HepG2 (cell line): ENCODE measurements at regions of chr9 and their contacts with region 1.

Region 1: GRCh38 chr9:100028201-100028784 is 70.5 kb downstream of the ERP44 start:
- DNase-seq: peak; percentile 61
- ATAC-seq: peak; percentile 99
- H3K4me3 ChIP-seq: no peak overlapping the region
- H3K27ac ChIP-seq: no peak overlapping the region
- H3K4me1 ChIP-seq: no peaks in the 10 kb centered on the region
- H3K27me3 ChIP-seq: no peaks in the 10 kb centered on the region
- CTCF ChIP-seq: peak; percentile 90
- EP300 ChIP-seq: no peak
- POLR2A ChIP-seq: no peak
- RAD21 ChIP-seq: peak; percentile 77

Region 2: GRCh38 chr9:100098887-100099721 is 70.8 kb after region 1 on chr9 and contains the starts of genes ERP44 and INVS:
- CTCF ChIA-PET with region 1: no interaction called
- POLR2A ChIA-PET with region 1: no interaction called
- in situ Hi-C with region 1: no loop called
- intact Hi-C with region 1: loop called (anchors 5 kb)
- DNase-seq: peak; percentile 98
- ATAC-seq: peak; percentile 96
- H3K4me3 ChIP-seq: peak within 1 kb of the TSS; percentile 81 to 100 (median 99)
- H3K27ac ChIP-seq: peak within 1 kb of the TSS; percentile 90
- H3K4me1 ChIP-seq: peaks cover 31% of the 10 kb centered on the region
- H3K27me3 ChIP-seq: peaks cover 0 to 5% of the 10 kb centered on the region in 2 experiments; a peak in 1 of 5 replicates
- CTCF ChIP-seq: peak; percentile 19
- EP300 ChIP-seq: no peak
- POLR2A ChIP-seq: peak; percentile 83 to 89
- RAD21 ChIP-seq: 0 out of 2 replicates have a peak, but pooled peaks have one; percentile 20
- total RNA-seq, gene ERP44: 7.4 and 13.8 TPM in 2 replicates
- total RNA-seq, gene INVS: 16.3 and 17.1 TPM in 2 replicates

Region 3: GRCh38 chr9:100216178-100216787 is 188.0 kb after region 1 on chr9:
- CTCF ChIA-PET with region 1: interaction called, 5 read pairs
- POLR2A ChIA-PET with region 1: no interaction called
- in situ Hi-C with region 1: loop called (anchors 10 kb)
- intact Hi-C with region 1: no loop called
- DNase-seq: peak; percentile 16
- ATAC-seq: peak; percentile 65
- H3K4me3 ChIP-seq: no peak overlapping the region
- H3K27ac ChIP-seq: no peak overlapping the region
- H3K4me1 ChIP-seq: no peaks in the 10 kb centered on the region
- H3K27me3 ChIP-seq: no peaks in the 10 kb centered on the region
- CTCF ChIP-seq: peak; percentile 56
- EP300 ChIP-seq: no peak
- POLR2A ChIP-seq: no peak
- RAD21 ChIP-seq: no peak

Region 4: GRCh38 chr9:100222674-100223073 is 194.4 kb after region 1 on chr9:
- CTCF ChIA-PET with region 1: no interaction called
- POLR2A ChIA-PET with region 1: no interaction called
- in situ Hi-C with region 1: loop called (anchors 10 kb)
- intact Hi-C with region 1: loop called (anchors 2 kb)
- DNase-seq: no peak
- ATAC-seq: no peak
- H3K4me3 ChIP-seq: no peak overlapping the region
- H3K27ac ChIP-seq: no peak overlapping the region
- H3K4me1 ChIP-seq: peaks cover 8% of the 10 kb centered on the region; the same call in 1 of the 2 replicates
- H3K27me3 ChIP-seq: no peaks in the 10 kb centered on the region
- CTCF ChIP-seq: no peak
- EP300 ChIP-seq: no peak
- POLR2A ChIP-seq: no peak
- RAD21 ChIP-seq: no peak

Region 5: DNA sequence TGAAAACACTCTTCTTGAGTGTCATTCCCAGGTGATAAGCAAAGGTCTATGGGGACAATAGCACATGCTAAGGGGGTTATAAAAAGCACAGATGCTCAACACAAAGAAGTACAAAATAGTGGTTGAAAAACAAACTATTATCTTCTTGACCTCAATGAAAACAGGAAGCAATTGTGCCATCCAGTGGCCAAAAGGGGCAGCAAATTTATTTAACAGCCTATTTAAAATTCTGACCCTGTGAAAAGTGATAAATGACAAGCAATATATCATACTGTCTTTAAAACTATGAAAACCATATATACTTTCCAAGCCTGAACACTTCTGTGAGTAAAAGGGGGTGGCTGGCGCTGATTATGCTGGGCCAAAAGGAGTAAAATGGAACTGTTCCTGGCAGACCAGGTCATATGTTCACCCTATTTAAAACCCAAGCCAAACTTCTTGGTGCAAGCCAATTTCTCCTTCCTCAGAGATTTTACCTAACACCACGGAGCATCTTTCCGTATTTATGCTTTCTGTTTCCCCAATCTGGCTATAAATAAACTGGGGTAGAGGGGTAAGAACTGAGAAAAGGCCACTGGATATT is 294.8 kb after region 1 on chr9:
- CTCF ChIA-PET with region 1: no interaction called
- POLR2A ChIA-PET with region 1: no interaction called
- in situ Hi-C with region 1: loop called (anchors 25 kb)
- intact Hi-C with region 1: loop called (anchors 2 kb)
- DNase-seq: peak; percentile 26
- ATAC-seq: peak; percentile 43; the same call in 1 of the 3 replicates
- H3K4me3 ChIP-seq: no peak overlapping the region
- H3K27ac ChIP-seq: no peak overlapping the region
- H3K4me1 ChIP-seq: no peaks in the 10 kb centered on the region
- H3K27me3 ChIP-seq: no peaks in the 10 kb centered on the region
- CTCF ChIP-seq: peak; percentile 65
- EP300 ChIP-seq: no peak
- POLR2A ChIP-seq: no peak
- RAD21 ChIP-seq: no peak

Region 6: DNA sequence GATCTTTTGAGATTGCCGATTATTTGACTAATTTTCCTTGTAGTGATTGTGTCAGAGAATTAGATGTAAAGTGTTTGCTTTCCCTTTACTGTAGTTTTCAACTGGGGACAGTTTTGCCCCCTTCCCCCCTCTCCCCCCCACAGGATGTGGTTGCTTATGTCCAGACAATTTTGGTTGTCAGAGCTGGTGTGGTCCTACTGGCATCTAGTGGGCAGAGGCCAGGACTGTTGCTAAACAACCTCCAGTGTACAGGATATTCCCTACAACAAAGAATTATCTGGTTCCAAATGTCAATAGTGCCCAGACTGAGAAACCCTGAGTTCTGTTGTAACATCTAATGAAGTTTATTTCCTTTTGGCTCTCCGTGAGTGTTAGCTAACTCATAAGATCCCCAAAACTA is 464.7 kb after region 1 on chr9:
- CTCF ChIA-PET with region 1: no interaction called
- POLR2A ChIA-PET with region 1: no interaction called
- in situ Hi-C with region 1: no loop called
- intact Hi-C with region 1: loop called (anchors 1 kb)
- DNase-seq: peak; percentile 18
- ATAC-seq: peak; percentile 70
- H3K4me3 ChIP-seq: no peak overlapping the region
- H3K27ac ChIP-seq: no peak overlapping the region
- H3K4me1 ChIP-seq: peaks cover 10% of the 10 kb centered on the region
- H3K27me3 ChIP-seq: no peaks in the 10 kb centered on the region
- CTCF ChIP-seq: peak; percentile 52
- EP300 ChIP-seq: no peak
- POLR2A ChIP-seq: no peak
- RAD21 ChIP-seq: no peak